ENCODE measurements at regions of chr19 and their contacts with region 1.

Region 1: GRCh38 chr19:53792721-53793433 is 31.2 kb downstream of the NLRP12 start:
- DNase-seq: peak; percentile 88
- H3K4me3 ChIP-seq: no peak overlapping the region
- H3K27ac ChIP-seq: no peak overlapping the region
- H3K4me1 ChIP-seq: no peaks in the 10 kb centered on the region
- H3K27me3 ChIP-seq: no peaks in the 10 kb centered on the region
- CTCF ChIP-seq: peak; percentile 99
- POLR2A ChIP-seq: no peak

Region 2: DNA sequence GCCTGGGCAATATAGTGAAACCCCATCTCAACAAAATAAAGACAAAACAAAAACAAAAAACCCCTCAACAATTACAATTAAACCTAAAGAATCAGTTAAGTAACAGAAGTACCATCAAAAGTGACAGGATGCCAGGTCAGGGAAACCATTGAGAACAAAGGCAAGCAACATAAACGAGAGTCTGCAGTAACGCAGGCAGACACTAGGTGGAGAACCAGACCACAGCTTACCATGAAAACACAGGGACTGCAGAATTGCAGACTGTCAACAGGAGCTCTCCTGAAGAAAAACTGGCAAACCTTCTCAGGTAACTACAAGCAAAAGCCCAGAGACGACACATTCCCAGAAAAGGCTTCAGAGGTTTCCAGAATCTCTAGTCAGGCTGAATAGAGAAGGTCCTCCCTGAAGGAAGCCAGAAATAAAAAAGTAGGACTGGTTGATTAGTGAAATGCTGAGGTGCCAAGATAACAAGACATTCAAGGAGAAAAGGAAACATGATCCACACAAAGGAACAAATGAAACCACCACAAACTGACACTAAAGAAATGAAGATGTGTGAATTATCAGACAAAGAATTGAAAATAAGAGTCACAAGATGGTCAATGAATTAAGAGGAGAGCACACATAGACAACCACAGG is 597.5 kb before region 1 on chr19:
- CTCF ChIA-PET with region 1: interaction called, 28 read pairs
- POLR2A ChIA-PET with region 1: no interaction called
- dilution Hi-C with region 1: no loop called
- intact Hi-C with region 1: loop called (anchors 5 kb)
- DNase-seq: peak; percentile 82
- H3K4me3 ChIP-seq: no peak overlapping the region
- H3K27ac ChIP-seq: no peak overlapping the region
- H3K4me1 ChIP-seq: peaks cover 2% of the 10 kb centered on the region
- H3K27me3 ChIP-seq: no peaks in the 10 kb centered on the region
- CTCF ChIP-seq: peak; percentile 83
- POLR2A ChIP-seq: no peak

Region 3: DNA sequence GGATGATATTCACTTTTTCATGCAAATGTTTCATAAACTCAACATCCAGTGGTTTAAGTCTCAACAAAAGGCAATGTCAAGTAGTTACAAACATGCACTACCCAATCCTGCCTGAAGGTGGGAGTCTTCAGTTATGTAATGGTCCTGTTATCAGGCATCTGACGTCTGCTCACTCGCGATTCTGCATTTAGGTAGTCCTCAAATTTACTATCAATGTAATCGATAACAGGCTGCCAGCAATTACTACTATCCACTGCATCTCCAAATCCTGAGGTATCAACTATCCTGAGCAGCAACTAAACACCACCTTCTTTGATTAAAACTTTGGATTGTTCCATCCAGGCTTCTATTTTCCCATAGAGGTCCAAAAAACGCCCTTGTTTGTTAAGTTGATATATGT is 19.9 kb before region 1 on chr19:
- CTCF ChIA-PET with region 1: interaction called, 16 read pairs
- POLR2A ChIA-PET with region 1: no interaction called
- dilution Hi-C with region 1: no loop called
- intact Hi-C with region 1: loop called (anchors 1 kb)
- DNase-seq: peak; percentile 66
- H3K4me3 ChIP-seq: no peak overlapping the region
- H3K27ac ChIP-seq: no peak overlapping the region
- H3K4me1 ChIP-seq: no peaks in the 10 kb centered on the region
- H3K27me3 ChIP-seq: no peaks in the 10 kb centered on the region
- CTCF ChIP-seq: peak; percentile 51 to 65
- POLR2A ChIP-seq: no peak

Region 4: GRCh38 chr19:53808710-53809125 is 15.8 kb after region 1 on chr19:
- CTCF ChIA-PET with region 1: interaction called, 40 read pairs
- POLR2A ChIA-PET with region 1: no interaction called
- dilution Hi-C with region 1: no loop called
- intact Hi-C with region 1: no loop called
- DNase-seq: peak; percentile 47
- H3K4me3 ChIP-seq: no peak overlapping the region
- H3K27ac ChIP-seq: no peak overlapping the region
- H3K4me1 ChIP-seq: peaks cover 10% of the 10 kb centered on the region
- H3K27me3 ChIP-seq: no peaks in the 10 kb centered on the region
- CTCF ChIP-seq: peak; percentile 51 to 59
- POLR2A ChIP-seq: no peak

Region 5: GRCh38 chr19:54035215-54036178 is 242.6 kb after region 1 on chr19:
- CTCF ChIA-PET with region 1: interaction called, 216 read pairs
- POLR2A ChIA-PET with region 1: no interaction called
- dilution Hi-C with region 1: no loop called
- intact Hi-C with region 1: loop called (anchors 1 kb)
- DNase-seq: peak; percentile 86
- H3K4me3 ChIP-seq: no peak overlapping the region
- H3K27ac ChIP-seq: peak overlapping the region; percentile 68
- H3K4me1 ChIP-seq: peaks cover 16% of the 10 kb centered on the region
- H3K27me3 ChIP-seq: no peaks in the 10 kb centered on the region
- CTCF ChIP-seq: no peak
- POLR2A ChIP-seq: no peak

Region 6: DNA sequence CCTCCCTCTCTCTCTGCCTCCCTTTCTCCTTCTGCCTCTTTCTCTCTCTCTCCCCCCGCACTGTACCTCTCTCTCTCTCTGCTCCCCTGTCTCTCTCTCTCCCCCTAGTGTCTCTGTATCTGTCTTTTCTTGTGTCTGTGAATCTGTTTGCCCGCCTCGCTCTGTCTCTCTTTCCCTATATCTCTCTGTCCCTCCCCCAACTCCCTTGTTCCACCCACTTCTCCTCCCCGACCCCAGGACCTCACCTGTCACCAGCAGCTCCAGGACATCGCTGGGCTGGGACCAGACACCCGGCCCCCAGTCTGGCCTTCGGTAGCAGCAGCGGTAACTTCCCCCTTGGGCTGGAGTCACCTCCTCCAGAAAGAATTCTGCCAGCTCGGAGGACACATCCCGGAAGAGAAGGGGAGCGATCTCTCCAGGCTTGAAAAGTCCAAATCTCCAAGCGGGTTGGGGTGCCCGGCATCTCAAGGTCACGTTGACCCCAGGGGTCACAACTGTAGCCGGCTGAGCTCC is 303.8 kb after region 1 on chr19:
- CTCF ChIA-PET with region 1: interaction called, 10 read pairs
- POLR2A ChIA-PET with region 1: no interaction called
- dilution Hi-C with region 1: no loop called
- intact Hi-C with region 1: loop called (anchors 1 kb)
- DNase-seq: no peak
- H3K4me3 ChIP-seq: no peak overlapping the region
- H3K27ac ChIP-seq: no peak overlapping the region
- H3K4me1 ChIP-seq: no peaks in the 10 kb centered on the region
- H3K27me3 ChIP-seq: no peaks in the 10 kb centered on the region
- CTCF ChIP-seq: peak in 1 of 2 donors; percentile 15
- POLR2A ChIP-seq: no peak

Region 7: DNA sequence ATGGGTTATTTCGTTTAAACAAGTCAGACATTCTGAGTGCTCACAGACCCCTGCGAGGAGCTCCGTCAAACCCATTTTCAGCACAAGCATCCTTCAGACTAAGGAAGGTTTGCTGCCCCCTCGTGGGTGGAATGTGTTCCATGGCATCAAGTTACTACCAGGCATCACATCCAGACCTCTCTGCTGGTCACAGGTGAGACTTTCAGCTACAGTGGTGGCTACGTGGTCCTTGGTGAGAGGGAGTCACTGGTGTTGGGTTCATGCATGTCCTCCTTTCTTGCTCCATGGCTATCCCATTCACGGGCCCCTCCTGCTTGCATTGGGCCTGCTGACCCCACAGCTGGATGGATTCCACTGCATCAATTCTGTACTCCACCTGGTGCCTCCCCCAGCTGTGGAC is 473.3 kb after region 1 on chr19:
- CTCF ChIA-PET with region 1: interaction called, 15 read pairs
- POLR2A ChIA-PET with region 1: no interaction called
- dilution Hi-C with region 1: no loop called
- intact Hi-C with region 1: no loop called
- DNase-seq: peak; percentile 70
- H3K4me3 ChIP-seq: no peak overlapping the region
- H3K27ac ChIP-seq: no peak overlapping the region
- H3K4me1 ChIP-seq: no peaks in the 10 kb centered on the region
- H3K27me3 ChIP-seq: peaks cover 6 to 9% of the 10 kb centered on the region in 2 experiments
- CTCF ChIP-seq: peak; percentile 72 to 83
- POLR2A ChIP-seq: no peak